B cell (primary cell): ENCODE measurements at regions of chr12 and their contacts with region 1.

Region 1: GRCh38 chr12:27123642-27124041 is 41.3 kb upstream of the C12orf71 start:
- DNase-seq: peak; percentile 48
- ATAC-seq: no peak
- H3K4me3 ChIP-seq: no peak overlapping the region
- H3K4me3 Mint-ChIP-seq: no peak overlapping the region
- H3K27ac ChIP-seq: no peak overlapping the region
- H3K27ac Mint-ChIP-seq: no peak overlapping the region
- H3K4me1 ChIP-seq: no peaks in the 10 kb centered on the region
- H3K4me1 Mint-ChIP-seq: no peaks in the 10 kb centered on the region
- H3K27me3 ChIP-seq: no peaks in the 10 kb centered on the region
- H3K27me3 Mint-ChIP-seq: no peaks in the 10 kb centered on the region
- CTCF ChIP-seq: peak; percentile 58

Region 2: DNA sequence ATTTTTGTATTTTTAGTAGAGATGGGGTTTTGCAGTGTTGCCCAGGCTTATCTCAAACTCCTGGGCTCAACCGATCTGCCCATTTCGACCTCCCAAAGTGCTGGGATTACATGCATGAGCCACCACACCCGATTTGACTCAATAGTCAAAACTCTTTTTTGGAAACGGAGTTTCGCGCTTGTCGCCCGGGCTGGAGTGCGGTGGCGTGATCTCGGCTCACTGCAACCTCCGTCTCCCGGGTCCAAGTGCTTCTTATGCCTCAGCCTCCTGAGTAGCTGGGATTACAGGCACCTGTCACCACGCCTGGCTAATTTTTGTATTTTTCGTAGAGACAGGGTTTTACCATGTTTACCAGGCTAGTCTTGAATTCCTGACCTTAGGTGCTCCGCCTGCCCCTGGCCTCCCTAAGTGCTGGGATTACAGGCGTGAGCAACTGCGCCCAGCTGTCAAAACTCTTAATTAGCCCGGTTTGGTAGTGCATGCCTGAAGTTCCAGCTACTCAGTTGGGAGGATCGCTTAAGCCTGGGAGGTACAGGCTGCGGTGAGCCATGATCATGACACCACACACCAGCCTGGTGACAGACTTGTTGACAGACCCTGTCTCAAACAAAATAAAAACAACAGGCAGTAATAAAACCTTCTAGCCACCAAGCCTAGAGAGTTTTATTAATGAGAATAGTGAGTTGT is 88.9 kb before region 1 on chr12:
- CTCF ChIA-PET with region 1: interaction called, 15 read pairs
- POLR2A ChIA-PET with region 1: no interaction called
- intact Hi-C with region 1: loop called (anchors 1 kb)
- DNase-seq: no peak
- ATAC-seq: no peak
- H3K4me3 ChIP-seq: no peak overlapping the region
- H3K4me3 Mint-ChIP-seq: no peak overlapping the region
- H3K27ac ChIP-seq: no peak overlapping the region
- H3K27ac Mint-ChIP-seq: no peak overlapping the region
- H3K4me1 ChIP-seq: no peaks in the 10 kb centered on the region
- H3K4me1 Mint-ChIP-seq: no peaks in the 10 kb centered on the region
- H3K27me3 ChIP-seq: no peaks in the 10 kb centered on the region
- H3K27me3 Mint-ChIP-seq: no peaks in the 10 kb centered on the region
- CTCF ChIP-seq: no peak

Region 3: GRCh38 chr12:27048822-27049752 is 74.6 kb before region 1 on chr12:
- CTCF ChIA-PET with region 1: no interaction called
- POLR2A ChIA-PET with region 1: no interaction called
- intact Hi-C with region 1: no loop called
- DNase-seq: no peak
- ATAC-seq: no peak
- H3K4me3 ChIP-seq: no peak overlapping the region
- H3K4me3 Mint-ChIP-seq: no peak overlapping the region
- H3K27ac ChIP-seq: no peak overlapping the region
- H3K27ac Mint-ChIP-seq: no peak overlapping the region
- H3K4me1 ChIP-seq: no peaks in the 10 kb centered on the region
- H3K4me1 Mint-ChIP-seq: no peaks in the 10 kb centered on the region
- H3K27me3 ChIP-seq: no peaks in the 10 kb centered on the region
- H3K27me3 Mint-ChIP-seq: no peaks in the 10 kb centered on the region
- CTCF ChIP-seq: no peak